Mammary epithelial cell (primary cell): ENCODE measurements at regions of chr18 and their contacts with region 1.

Region 1: GRCh38 chr18:9951022-9951859 is 37.4 kb downstream of the VAPA start:
- DNase-seq: peak; percentile 46
- H3K4me3 ChIP-seq: no peak overlapping the region
- H3K27ac ChIP-seq: no peak overlapping the region
- H3K4me1 ChIP-seq: peaks cover 28% of the 10 kb centered on the region
- H3K27me3 ChIP-seq: no peaks in the 10 kb centered on the region
- CTCF ChIP-seq: peak; percentile 81 to 83

Region 2: GRCh38 chr18:9683407-9684396 is 267.5 kb before region 1 on chr18:
- CTCF ChIA-PET with region 1: no interaction called
- dilution Hi-C with region 1: no loop called
- in situ Hi-C with region 1: no loop called
- intact Hi-C with region 1: loop called (anchors 1 kb)
- DNase-seq: peak; percentile 50
- H3K4me3 ChIP-seq: no peak overlapping the region
- H3K27ac ChIP-seq: no peak overlapping the region
- H3K4me1 ChIP-seq: peaks cover 6% of the 10 kb centered on the region
- H3K27me3 ChIP-seq: no peaks in the 10 kb centered on the region
- CTCF ChIP-seq: peak; percentile 36 to 59

Region 3: GRCh38 chr18:9827641-9828505 is 123.4 kb before region 1 on chr18:
- CTCF ChIA-PET with region 1: no interaction called
- dilution Hi-C with region 1: no loop called
- in situ Hi-C with region 1: no loop called
- intact Hi-C with region 1: loop called (anchors 5 kb)
- DNase-seq: peak; percentile 98
- H3K4me3 ChIP-seq: peak overlapping the region in 2 of 3 experiments; percentile 40 to 41
- H3K27ac ChIP-seq: peak overlapping the region; percentile 77
- H3K4me1 ChIP-seq: peaks cover 54% of the 10 kb centered on the region
- H3K27me3 ChIP-seq: no peaks in the 10 kb centered on the region
- CTCF ChIP-seq: no peak

Region 4: GRCh38 chr18:9849407-9850281 is 101.6 kb before region 1 on chr18:
- CTCF ChIA-PET with region 1: no interaction called
- dilution Hi-C with region 1: no loop called
- in situ Hi-C with region 1: no loop called
- intact Hi-C with region 1: loop called (anchors 5 kb)
- DNase-seq: no peak
- H3K4me3 ChIP-seq: no peak overlapping the region
- H3K27ac ChIP-seq: no peak overlapping the region
- H3K4me1 ChIP-seq: no peaks in the 10 kb centered on the region
- H3K27me3 ChIP-seq: no peaks in the 10 kb centered on the region
- CTCF ChIP-seq: no peak

Region 5: GRCh38 chr18:10285283-10285640 is 334.0 kb after region 1 on chr18:
- CTCF ChIA-PET with region 1: no interaction called
- dilution Hi-C with region 1: no loop called
- in situ Hi-C with region 1: no loop called
- intact Hi-C with region 1: no loop called
- DNase-seq: no peak
- H3K4me3 ChIP-seq: no peak overlapping the region
- H3K27ac ChIP-seq: no peak overlapping the region
- H3K4me1 ChIP-seq: no peaks in the 10 kb centered on the region
- H3K27me3 ChIP-seq: no peaks in the 10 kb centered on the region
- CTCF ChIP-seq: no peak